Panc1 (cell line): ENCODE measurements at regions of chr1 and their contacts with region 1.

Region 1: GRCh38 chr1:17494114-17494729 is 45.3 kb upstream of the ARHGEF10L start:
- DNase-seq: peak; percentile 59
- ATAC-seq: peak; percentile 95
- H3K4me3 ChIP-seq: no peak overlapping the region
- H3K27ac ChIP-seq: no peak overlapping the region
- H3K4me1 ChIP-seq: no peaks in the 10 kb centered on the region
- H3K27me3 ChIP-seq: no peaks in the 10 kb centered on the region
- CTCF ChIP-seq: peak; percentile 96

Region 2: DNA sequence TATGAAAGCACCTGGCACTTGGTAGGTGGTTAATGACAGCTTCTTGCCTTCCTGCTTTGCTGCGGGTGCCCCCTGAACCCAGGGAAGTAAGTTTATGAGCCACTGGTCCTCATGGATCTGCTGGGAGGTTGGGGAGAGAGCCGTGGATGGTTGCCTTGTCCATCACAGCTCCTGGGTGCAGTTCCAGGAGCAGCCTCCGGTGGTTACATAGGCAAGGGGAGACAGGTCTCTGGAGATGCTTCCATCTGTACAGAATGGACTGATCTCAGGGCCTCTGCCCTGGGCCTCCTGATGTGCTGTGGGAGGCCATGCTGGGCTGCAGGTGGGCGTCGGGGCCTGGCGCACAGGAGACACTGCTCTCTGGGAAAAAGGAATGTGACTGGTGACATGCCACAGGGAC is 13.7 kb after region 1 on chr1:
- CTCF ChIA-PET with region 1: no interaction called
- POLR2A ChIA-PET with region 1: no interaction called
- in situ Hi-C with region 1: no loop called
- intact Hi-C with region 1: loop called (anchors 2 kb)
- DNase-seq: no peak
- ATAC-seq: peak; percentile 76
- H3K4me3 ChIP-seq: no peak overlapping the region
- H3K27ac ChIP-seq: no peak overlapping the region
- H3K4me1 ChIP-seq: no peaks in the 10 kb centered on the region
- H3K27me3 ChIP-seq: no peaks in the 10 kb centered on the region
- CTCF ChIP-seq: no peak

Region 3: GRCh38 chr1:17574516-17574915 is 80.3 kb after region 1 on chr1:
- CTCF ChIA-PET with region 1: interaction called, 3 read pairs
- POLR2A ChIA-PET with region 1: interaction called, 19 read pairs
- in situ Hi-C with region 1: no loop called
- intact Hi-C with region 1: no loop called
- DNase-seq: no peak
- ATAC-seq: peak; percentile 70
- H3K4me3 ChIP-seq: no peak overlapping the region
- H3K27ac ChIP-seq: no peak overlapping the region
- H3K4me1 ChIP-seq: no peaks in the 10 kb centered on the region
- H3K27me3 ChIP-seq: no peaks in the 10 kb centered on the region
- CTCF ChIP-seq: no peak

Region 4: GRCh38 chr1:17606826-17607440 is 112.7 kb after region 1 on chr1:
- CTCF ChIA-PET with region 1: interaction called, 13 read pairs
- POLR2A ChIA-PET with region 1: no interaction called
- in situ Hi-C with region 1: no loop called
- intact Hi-C with region 1: loop called (anchors 1 kb)
- DNase-seq: peak; percentile 43
- ATAC-seq: peak; percentile 74
- H3K4me3 ChIP-seq: no peak overlapping the region
- H3K27ac ChIP-seq: no peak overlapping the region
- H3K4me1 ChIP-seq: no peaks in the 10 kb centered on the region
- H3K27me3 ChIP-seq: no peaks in the 10 kb centered on the region
- CTCF ChIP-seq: peak; percentile 95

Region 5: DNA sequence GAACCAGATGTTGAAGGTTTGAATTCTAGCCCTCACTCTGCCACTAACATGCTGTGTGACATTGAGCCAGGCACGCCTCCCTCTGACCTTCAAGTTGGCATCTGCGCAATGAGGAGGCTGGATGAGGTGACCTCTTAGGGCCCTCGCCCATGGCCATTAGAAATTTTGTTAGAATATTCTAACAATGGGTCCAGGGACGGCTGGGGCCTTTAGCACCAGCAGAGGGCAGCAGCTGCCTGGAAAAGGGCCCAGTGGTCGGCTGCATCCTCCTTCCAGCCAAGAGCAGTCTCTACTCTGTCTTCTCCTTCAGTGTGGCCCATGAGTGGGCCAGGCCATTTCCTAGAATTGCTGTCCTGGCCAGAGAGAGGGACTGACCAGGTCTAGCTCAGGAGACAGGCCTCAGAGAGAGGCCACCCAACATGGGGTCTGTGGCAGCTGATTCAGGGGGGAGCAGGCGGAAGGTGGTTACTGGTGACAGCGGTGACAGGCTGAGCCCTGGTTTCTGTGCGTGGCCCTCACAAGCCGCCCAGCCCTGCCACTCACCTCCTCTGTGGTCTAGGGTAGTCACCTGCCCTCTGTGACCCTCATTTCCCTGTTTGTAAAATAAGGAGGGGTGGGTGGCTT is 159.6 kb after region 1 on chr1:
- CTCF ChIA-PET with region 1: interaction called, 4 read pairs
- POLR2A ChIA-PET with region 1: no interaction called
- in situ Hi-C with region 1: no loop called
- intact Hi-C with region 1: loop called (anchors 5 kb)
- DNase-seq: no peak
- ATAC-seq: peak; percentile 91
- H3K4me3 ChIP-seq: no peak overlapping the region
- H3K27ac ChIP-seq: no peak overlapping the region
- H3K4me1 ChIP-seq: no peaks in the 10 kb centered on the region
- H3K27me3 ChIP-seq: no peaks in the 10 kb centered on the region
- CTCF ChIP-seq: peak; percentile 93

Region 6: GRCh38 chr1:17909634-17910033 is 415.4 kb after region 1 on chr1:
- CTCF ChIA-PET with region 1: no interaction called
- POLR2A ChIA-PET with region 1: no interaction called
- in situ Hi-C with region 1: no loop called
- intact Hi-C with region 1: no loop called
- DNase-seq: no peak
- ATAC-seq: no peak
- H3K4me3 ChIP-seq: no peak overlapping the region
- H3K27ac ChIP-seq: no peak overlapping the region
- H3K4me1 ChIP-seq: no peaks in the 10 kb centered on the region
- H3K27me3 ChIP-seq: peaks cover 36% of the 10 kb centered on the region
- CTCF ChIP-seq: peak; percentile 45; the same call in 1 of the 2 replicates